Activated T-helper 1 cell treated with anti-CD3 and anti-CD28 coated beads, Interleukin-12 subunit alpha, Interleukin-12 subunit beta, Interleukin-2, Interleukin-4 antibody, amounts not matched to agents 30 ng/mL and 10 ng/mL and 1 ng/mL, durations not matched to agents 14 hours and 24 hours and 36 hours (primary cell): ENCODE measurements at regions of chr9 and their contacts with region 1.

Region 1: DNA sequence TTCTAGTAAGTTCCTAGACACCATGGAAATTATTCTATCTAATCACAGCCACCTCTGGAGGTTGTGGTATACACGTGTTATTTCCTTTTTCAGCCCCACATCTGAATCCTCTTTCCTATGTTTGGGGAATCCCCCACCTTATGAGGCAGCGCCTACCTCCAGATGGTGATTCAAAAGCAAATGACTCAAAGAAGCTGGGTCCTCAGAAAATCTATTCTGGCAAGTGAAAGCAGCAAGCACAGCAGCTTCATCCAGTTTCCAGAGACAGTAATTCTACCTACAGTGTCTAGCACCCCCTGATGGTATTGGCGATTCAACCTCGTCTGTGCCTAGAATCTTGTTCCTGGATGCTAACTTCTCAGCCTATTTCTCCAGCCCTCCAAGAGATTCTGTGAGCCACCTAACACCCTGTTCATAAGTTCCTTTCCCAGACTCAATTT is 43.0 kb downstream of the STRBP start:
- DNase-seq: peak; percentile 50
- H3K4me3 Mint-ChIP-seq: peak overlapping the region; percentile 24
- H3K27ac Mint-ChIP-seq: peak overlapping the region; percentile 68
- H3K4me1 Mint-ChIP-seq: peaks cover 23% of the 10 kb centered on the region
- H3K27me3 Mint-ChIP-seq: no peaks in the 10 kb centered on the region

Region 2: GRCh38 chr9:122464633-122465567 is 760.5 kb before region 1 on chr9:
- intact Hi-C with region 1: loop called (anchors 10 kb)
- DNase-seq: peak; percentile 59
- H3K4me3 Mint-ChIP-seq: peak overlapping the region; percentile 81
- H3K27ac Mint-ChIP-seq: peak overlapping the region; percentile 80
- H3K4me1 Mint-ChIP-seq: peaks cover 17% of the 10 kb centered on the region
- H3K27me3 Mint-ChIP-seq: peaks cover 26% of the 10 kb centered on the region

Region 3: GRCh38 chr9:122931226-122932121 is 293.9 kb before region 1 on chr9 and contains the start of gene ZBTB26:
- intact Hi-C with region 1: loop called (anchors 1 kb)
- DNase-seq: peak; percentile 83
- H3K4me3 Mint-ChIP-seq: no peak within 1 kb of the TSS
- H3K27ac Mint-ChIP-seq: peak within 1 kb of the TSS; percentile 83
- H3K4me1 Mint-ChIP-seq: peaks cover 8% of the 10 kb centered on the region
- H3K27me3 Mint-ChIP-seq: no peaks in the 10 kb centered on the region
- total RNA-seq, gene ZBTB26: 8.3 and 9.9 TPM in 2 replicates

Region 4: GRCh38 chr9:123081824-123082223 is 143.6 kb before region 1 on chr9:
- intact Hi-C with region 1: loop called (anchors 1 kb)
- DNase-seq: no peak
- H3K4me3 Mint-ChIP-seq: no peak overlapping the region
- H3K27ac Mint-ChIP-seq: no peak overlapping the region
- H3K4me1 Mint-ChIP-seq: no peaks in the 10 kb centered on the region
- H3K27me3 Mint-ChIP-seq: no peaks in the 10 kb centered on the region

Region 5: GRCh38 chr9:123174887-123175518 is 50.4 kb before region 1 on chr9:
- intact Hi-C with region 1: no loop called
- DNase-seq: no peak
- H3K4me3 Mint-ChIP-seq: no peak overlapping the region
- H3K27ac Mint-ChIP-seq: no peak overlapping the region
- H3K4me1 Mint-ChIP-seq: peaks cover 19% of the 10 kb centered on the region
- H3K27me3 Mint-ChIP-seq: no peaks in the 10 kb centered on the region

Region 6: GRCh38 chr9:123208626-123209174 is 16.7 kb before region 1 on chr9:
- intact Hi-C with region 1: no loop called
- DNase-seq: no peak
- H3K4me3 Mint-ChIP-seq: no peak overlapping the region
- H3K27ac Mint-ChIP-seq: no peak overlapping the region
- H3K4me1 Mint-ChIP-seq: no peaks in the 10 kb centered on the region
- H3K27me3 Mint-ChIP-seq: no peaks in the 10 kb centered on the region

Region 7: DNA sequence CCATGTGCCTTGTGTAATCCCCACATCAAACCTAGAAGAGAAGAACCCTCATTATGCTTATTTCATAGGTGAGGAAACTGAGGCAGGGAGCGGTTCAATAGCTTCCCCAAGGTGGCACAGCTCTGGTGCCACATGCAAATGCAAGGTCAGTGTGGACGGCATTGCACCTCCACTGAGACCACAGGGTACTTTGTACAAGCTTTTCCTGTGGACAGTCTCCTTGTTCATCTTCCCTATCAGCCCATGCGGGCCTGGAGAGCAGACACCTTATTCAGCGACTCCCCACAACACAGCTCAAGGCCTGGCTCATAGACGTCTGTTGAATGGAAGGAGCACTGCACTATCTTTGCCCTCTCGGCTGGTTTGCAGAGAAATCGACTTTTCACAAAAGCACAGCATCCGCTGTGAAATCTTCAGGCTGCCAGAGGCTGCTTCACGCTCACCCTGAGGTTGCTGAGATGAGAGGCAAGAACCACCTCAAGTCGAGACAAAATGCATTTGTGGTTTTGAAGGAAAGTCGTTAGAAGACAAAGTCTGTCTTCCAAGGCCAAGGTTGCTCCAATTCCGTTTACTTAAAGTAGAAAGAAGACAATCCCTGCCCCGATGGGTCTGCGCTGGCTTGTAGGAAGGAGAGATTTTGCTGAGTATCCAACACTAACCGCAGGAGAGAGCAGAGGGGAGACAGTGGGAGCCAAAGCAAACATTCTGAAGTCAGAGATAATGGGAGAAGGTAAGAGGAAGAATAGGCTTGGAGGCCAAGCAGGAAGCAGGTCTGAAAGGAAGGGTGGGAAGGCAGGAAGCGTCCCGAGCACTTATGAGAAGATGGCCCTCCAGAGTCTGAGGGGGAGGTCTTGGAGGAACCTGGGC is 77.2 kb after region 1 on chr9:
- intact Hi-C with region 1: no loop called
- DNase-seq: peak; percentile 8
- H3K4me3 Mint-ChIP-seq: no peak overlapping the region
- H3K27ac Mint-ChIP-seq: peak overlapping the region; percentile 31
- H3K4me1 Mint-ChIP-seq: peaks cover 18% of the 10 kb centered on the region
- H3K27me3 Mint-ChIP-seq: no peaks in the 10 kb centered on the region

Region 8: GRCh38 chr9:123338710-123339665 is 113.6 kb after region 1 on chr9:
- intact Hi-C with region 1: loop called (anchors 1 kb)
- DNase-seq: peak; percentile 62
- H3K4me3 Mint-ChIP-seq: peak overlapping the region; percentile 83
- H3K27ac Mint-ChIP-seq: peak overlapping the region; percentile 93
- H3K4me1 Mint-ChIP-seq: peaks cover 40% of the 10 kb centered on the region
- H3K27me3 Mint-ChIP-seq: no peaks in the 10 kb centered on the region

Region 9: GRCh38 chr9:123562844-123563346 is 337.5 kb after region 1 on chr9:
- intact Hi-C with region 1: no loop called
- DNase-seq: no peak
- H3K4me3 Mint-ChIP-seq: no peak overlapping the region
- H3K27ac Mint-ChIP-seq: peak overlapping the region; percentile 28
- H3K4me1 Mint-ChIP-seq: peaks cover 21% of the 10 kb centered on the region
- H3K27me3 Mint-ChIP-seq: no peaks in the 10 kb centered on the region

Region 10: DNA sequence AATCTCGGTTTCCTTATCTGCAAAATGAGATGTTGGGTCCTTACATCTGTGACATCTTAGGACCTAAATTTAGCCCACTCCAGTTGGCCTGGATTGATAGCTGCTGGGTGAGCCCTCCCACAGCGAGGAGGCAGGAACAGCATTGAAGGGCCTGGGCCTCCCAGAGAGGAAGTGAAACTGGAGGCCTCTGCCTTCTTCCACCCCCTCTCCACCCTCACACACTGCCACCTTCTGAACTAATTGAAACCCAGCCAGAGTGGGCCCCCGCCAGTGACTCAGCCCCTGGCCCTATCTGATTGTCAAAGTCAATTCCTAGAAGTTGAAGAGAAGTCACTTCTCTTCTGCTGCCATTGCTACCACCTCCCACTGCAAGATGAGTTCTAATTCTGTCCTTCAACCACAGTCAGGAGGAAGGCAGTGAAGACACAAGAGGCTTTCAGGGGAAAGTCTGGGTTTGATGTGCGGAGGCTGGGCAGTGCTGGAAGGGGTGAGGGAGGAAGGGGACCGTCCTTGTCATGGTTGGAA is 977.1 kb after region 1 on chr9:
- intact Hi-C with region 1: loop called (anchors 10 kb)
- DNase-seq: peak; percentile 71
- H3K4me3 Mint-ChIP-seq: peak overlapping the region; percentile 58
- H3K27ac Mint-ChIP-seq: peak overlapping the region; percentile 95
- H3K4me1 Mint-ChIP-seq: peaks cover 69% of the 10 kb centered on the region
- H3K27me3 Mint-ChIP-seq: peaks cover 2% of the 10 kb centered on the region